A549 (cell line): ENCODE measurements at regions of chr17 and their contacts with region 1.

Region 1: DNA sequence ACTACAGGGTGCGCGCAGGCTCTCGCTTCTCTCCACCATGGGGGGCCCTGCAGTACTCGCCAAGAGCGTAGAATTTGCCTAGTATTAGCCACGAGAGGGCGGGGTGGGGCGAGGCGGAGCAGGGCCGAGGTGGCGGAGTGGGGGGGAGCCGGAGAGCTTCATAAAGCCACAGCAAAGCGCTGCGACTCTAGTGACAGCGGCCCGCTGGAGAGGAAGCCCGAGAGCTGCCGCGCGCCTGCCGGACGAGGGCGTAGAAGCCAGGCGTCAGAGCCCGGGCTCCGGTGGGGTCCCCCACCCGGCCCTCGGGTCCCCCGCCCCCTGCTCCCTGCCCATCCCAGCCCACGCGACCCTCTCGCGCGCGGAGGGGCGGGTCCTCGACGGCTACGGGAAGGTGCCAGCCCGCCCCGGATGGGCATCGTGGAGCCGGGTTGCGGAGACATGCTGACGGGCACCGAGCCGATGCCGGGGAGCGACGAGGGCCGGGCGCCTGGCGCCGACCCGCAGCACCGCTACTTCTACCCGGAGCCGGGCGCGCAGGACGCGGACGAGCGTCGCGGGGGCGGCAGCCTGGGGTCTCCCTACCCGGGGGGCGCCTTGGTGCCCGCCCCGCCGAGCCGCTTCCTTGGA is at the start of gene TBX21:
- DNase-seq: peak; percentile 80 to 90
- ATAC-seq: peak; percentile 74 to 91
- H3K4me3 ChIP-seq: peak within 1 kb of the TSS; percentile 48
- H3K27ac ChIP-seq: peak within 1 kb of the TSS in 1 of 2 experiments; percentile 74; a peak in 3 of 6 replicates
- H3K4me1 ChIP-seq: 0 out of 3 replicates have a peak, but pooled peaks cover 4% of the 10 kb centered on the region
- CTCF ChIP-seq: peak; percentile 45; the same call in 2 of the 3 replicates
- EP300 ChIP-seq: no peak
- POLR2A ChIP-seq: 0 out of 2 replicates have a peak, but pooled peaks have one; percentile 39
- RAD21 ChIP-seq: peak; percentile 40; a peak in 3 of 5 replicates
- polyA plus RNA-seq, gene TBX21: 0.03 TPM in 1 of 2 replicates, not detected in the other

Region 2: GRCh38 chr17:46995841-46996571 is 737.2 kb before region 1 on chr17:
- CTCF ChIA-PET with region 1: no interaction called
- POLR2A ChIA-PET with region 1: interaction called, 11 read pairs
- DNase-seq: no peak
- ATAC-seq: peak; percentile 40 to 46; a peak in 3 of 6 replicates
- H3K4me3 ChIP-seq: no peak overlapping the region
- H3K27ac ChIP-seq: no peak overlapping the region
- H3K4me1 ChIP-seq: peaks cover 3% of the 10 kb centered on the region; the same call in 1 of the 3 replicates
- CTCF ChIP-seq: no peak
- EP300 ChIP-seq: no peak
- POLR2A ChIP-seq: no peak
- RAD21 ChIP-seq: no peak

Region 3: DNA sequence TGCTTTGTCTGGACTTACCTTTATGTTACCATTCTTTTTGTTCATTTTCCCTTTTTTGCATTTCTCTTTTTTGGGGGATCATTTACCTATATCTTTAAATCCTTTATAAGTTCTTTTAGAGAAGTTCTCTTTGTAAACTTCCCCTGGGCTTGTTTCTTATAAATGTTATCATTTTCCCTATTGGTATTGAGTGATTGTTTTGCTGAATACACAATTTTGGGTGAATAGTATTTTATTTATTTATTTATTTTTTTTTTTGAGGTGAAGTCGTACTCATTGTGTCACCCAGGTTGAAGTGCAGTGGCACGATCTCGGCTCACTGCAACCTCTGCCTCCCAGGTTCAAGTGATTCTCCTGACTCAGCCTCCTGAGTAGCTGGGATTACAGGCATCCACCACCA is 18.3 kb after region 1 on chr17:
- CTCF ChIA-PET with region 1: interaction called, 12 read pairs
- POLR2A ChIA-PET with region 1: no interaction called
- DNase-seq: no peak
- ATAC-seq: no peak
- H3K4me3 ChIP-seq: no peak overlapping the region
- H3K27ac ChIP-seq: no peak overlapping the region
- H3K4me1 ChIP-seq: no peaks in the 10 kb centered on the region
- CTCF ChIP-seq: no peak
- EP300 ChIP-seq: no peak
- POLR2A ChIP-seq: no peak
- RAD21 ChIP-seq: no peak

Region 4: DNA sequence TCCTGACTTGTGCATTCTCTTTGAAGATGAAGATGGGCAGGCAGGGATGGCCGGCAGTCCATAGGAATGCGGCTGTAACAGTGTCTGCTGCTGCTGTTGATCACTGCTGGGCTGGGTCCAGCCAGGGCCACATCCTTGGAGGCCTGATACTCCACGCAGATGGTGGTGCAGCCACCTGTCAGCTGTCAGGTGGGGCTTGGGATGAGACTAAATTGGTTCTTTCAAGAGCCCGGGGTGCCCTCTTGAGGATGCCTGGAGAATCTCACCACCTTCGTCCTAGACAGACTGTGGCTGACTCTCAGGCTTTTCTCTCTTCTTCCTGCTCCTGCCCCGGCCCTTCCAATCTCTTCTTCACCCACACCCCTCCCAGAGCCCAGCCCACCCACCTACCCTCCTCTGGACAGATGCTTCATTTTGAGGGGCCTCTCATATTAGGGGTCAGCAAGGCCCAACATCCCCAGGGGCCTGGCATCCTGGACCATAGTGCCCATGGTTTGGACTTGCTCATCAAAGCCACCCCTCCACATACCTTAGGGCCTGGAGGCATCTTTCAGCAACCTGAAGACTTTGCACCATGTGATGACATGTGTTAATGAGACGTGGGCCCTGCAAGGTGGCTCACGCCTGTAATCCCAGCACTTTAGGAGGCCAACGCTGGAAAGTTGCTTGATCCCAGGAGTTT is 69.3 kb after region 1 on chr17:
- CTCF ChIA-PET with region 1: interaction called, 22 read pairs
- POLR2A ChIA-PET with region 1: no interaction called
- DNase-seq: peak; percentile 77 to 92
- ATAC-seq: peak; percentile 91 to 95
- H3K4me3 ChIP-seq: no peak overlapping the region
- H3K27ac ChIP-seq: no peak overlapping the region
- H3K4me1 ChIP-seq: no peaks in the 10 kb centered on the region
- CTCF ChIP-seq: peak; percentile 84
- EP300 ChIP-seq: no peak
- POLR2A ChIP-seq: no peak
- RAD21 ChIP-seq: peak; percentile 89 to 90